ENCODE measurements at regions of chr6 and their contacts with region 1.

Region 1: DNA sequence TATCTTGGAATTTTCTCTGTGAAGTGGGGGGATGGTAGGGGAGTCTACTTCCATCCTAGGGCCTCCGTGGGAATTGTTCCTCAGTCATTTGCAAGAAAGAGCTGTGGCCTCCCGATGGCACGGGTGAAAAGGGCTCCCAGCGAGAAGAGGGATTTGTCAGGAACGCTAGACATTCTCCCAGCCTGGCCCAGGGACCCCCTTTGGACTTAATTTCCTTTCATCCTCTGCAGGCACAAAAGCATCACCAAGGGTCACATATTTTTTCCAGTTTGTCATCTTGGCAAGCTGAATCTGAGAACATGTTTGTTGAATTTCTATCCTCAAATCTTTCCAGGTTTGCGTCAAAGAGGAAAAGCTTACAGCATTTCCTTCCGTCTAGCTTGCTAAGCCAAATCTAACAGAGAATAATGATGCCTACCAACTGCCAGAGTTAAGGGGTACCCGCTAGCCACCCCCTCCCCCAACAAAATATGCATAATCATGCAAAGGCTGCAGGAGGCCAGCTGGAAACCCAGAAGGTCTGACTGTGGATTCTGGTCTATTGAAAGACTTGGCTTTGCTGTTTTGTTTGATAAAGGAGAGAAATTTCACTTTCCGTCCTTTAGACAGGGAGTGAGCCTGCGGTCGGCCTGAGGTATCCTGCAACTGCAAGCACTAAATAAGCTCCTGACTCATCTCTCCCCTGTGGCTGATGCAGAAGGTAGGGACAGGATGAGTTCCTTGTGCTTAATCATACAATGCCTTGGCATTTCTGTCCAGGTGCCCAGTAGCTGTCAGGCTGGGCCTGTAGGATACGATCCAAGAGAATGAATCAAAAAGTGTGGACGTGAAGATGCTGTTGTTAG is 23.1 kb downstream of the PSMG4 start:
- DNase-seq: no peak
- H3K4me3 ChIP-seq: no peak overlapping the region
- H3K27ac ChIP-seq: no peak overlapping the region
- H3K4me1 ChIP-seq: peaks cover 6% of the 10 kb centered on the region
- H3K27me3 ChIP-seq: no peaks in the 10 kb centered on the region
- CTCF ChIP-seq: no peak
- POLR2A ChIP-seq: no peak

Region 2: GRCh38 chr6:3108746-3109414 is 173.0 kb before region 1 on chr6:
- intact Hi-C with region 1: no loop called
- DNase-seq: no peak
- H3K4me3 ChIP-seq: no peak overlapping the region
- H3K27ac ChIP-seq: no peak overlapping the region
- H3K4me1 ChIP-seq: no peaks in the 10 kb centered on the region
- H3K27me3 ChIP-seq: no peaks in the 10 kb centered on the region
- CTCF ChIP-seq: no peak
- POLR2A ChIP-seq: no peak

Region 3: DNA sequence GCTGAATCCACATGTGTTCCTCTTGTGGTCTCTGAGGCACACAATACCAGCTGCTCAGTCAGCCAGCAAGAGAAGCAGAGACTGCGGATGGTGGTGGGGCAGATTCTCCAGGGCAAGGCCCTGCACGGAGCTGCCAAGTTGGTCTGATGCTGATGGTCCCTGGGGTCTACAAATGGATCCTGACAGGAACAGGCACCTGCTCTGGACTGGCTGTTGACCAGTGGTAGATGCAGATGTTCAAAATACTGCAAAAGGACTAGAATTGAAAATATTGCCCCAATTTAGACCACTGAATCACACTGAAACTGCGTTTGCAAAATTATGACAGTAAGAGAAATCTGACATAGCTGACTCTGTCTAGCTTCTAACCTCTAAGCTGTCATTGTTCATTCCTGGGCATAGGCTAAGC is 94.9 kb before region 1 on chr6:
- intact Hi-C with region 1: no loop called
- DNase-seq: no peak
- H3K4me3 ChIP-seq: no peak overlapping the region
- H3K27ac ChIP-seq: no peak overlapping the region
- H3K4me1 ChIP-seq: no peaks in the 10 kb centered on the region
- H3K27me3 ChIP-seq: no peaks in the 10 kb centered on the region
- CTCF ChIP-seq: no peak
- POLR2A ChIP-seq: no peak

Region 4: DNA sequence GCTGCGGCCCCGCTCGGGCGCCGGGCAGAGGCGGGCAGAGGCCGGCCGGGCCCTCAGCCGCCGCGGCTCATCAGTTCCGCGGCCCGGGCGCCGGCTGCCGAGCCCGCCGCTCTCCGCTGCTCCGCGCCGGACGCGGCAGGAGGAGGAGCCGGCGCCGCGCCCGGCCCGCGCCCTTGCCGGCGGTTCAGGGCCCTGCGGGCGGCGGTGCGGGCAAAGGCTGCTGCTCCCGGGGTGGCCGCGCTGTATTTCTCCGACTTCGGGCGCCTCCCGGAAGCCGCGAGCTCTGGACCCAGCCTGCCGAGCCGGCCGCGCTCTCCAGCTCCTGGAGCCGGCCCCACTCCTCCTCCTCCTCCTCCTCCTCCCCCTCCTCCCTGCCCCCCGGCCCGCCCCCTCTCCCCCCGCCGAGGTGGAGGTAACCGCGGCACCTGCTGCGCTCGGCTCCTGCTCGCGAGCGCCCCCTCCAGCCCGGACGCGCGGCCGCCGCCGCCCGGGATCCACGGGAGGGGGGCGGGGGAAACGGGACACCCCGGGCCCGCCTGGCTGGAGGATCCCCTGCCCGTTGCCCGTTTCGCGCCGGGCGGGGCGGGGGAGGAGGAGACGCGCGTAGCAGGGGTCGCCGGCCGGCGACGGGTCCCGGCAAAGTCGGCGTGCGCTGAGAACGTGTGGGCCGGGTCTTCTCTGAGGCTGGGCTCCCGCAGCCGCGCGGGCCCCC is 175.1 kb after region 1 on chr6 and contains the start of gene SLC22A23:
- intact Hi-C with region 1: loop called (anchors 5 kb)
- DNase-seq: peak; percentile 87
- H3K4me3 ChIP-seq: peak within 1 kb of the TSS; percentile 68
- H3K27ac ChIP-seq: peak within 1 kb of the TSS; percentile 84 to 88
- H3K4me1 ChIP-seq: no peaks in the 10 kb centered on the region
- H3K27me3 ChIP-seq: no peaks in the 10 kb centered on the region
- CTCF ChIP-seq: peak; percentile 74 to 94 (median 86)
- POLR2A ChIP-seq: peak; percentile 52
- total RNA-seq, gene SLC22A23: 53.1 to 129 TPM

Region 5: DNA sequence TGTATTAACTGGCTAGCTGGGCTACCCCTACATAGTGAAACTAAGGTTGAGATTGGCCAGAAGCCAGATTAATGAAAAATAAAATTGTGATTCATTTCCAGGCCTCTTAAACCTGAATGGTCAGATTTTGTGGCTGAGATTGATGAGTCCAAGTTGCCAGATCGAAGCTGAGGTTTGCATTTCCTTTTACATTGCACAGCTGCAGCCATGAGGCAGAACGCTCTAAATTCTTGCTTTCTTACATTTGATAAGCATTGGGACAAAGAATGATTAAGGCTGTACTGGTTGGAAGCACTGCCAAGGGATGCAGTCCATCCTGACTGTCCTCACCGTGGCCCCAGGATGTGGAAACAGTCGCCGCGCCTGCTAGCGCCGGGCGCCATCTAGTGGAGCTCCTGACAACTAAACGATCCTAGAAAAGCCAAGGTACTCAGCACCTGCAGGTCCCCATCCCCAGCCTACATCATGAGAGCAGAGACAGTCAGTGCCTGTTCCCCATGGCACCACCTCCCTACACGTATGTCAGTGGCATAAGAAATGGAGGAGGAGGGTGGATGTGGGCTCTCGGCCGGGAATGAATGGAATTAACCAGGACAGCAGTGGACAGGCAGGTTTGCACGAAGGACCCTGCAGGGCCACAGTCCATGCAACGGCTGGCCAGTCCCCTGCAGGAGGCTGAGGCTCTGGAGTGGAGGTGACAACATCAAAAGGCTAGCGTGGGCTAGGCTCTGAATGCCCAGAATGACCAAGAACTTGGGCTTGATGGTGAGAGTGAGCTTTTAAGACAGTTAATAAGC is 450.7 kb after region 1 on chr6:
- intact Hi-C with region 1: loop called (anchors 2 kb)
- DNase-seq: peak; percentile 79
- H3K4me3 ChIP-seq: no peak overlapping the region
- H3K27ac ChIP-seq: peak overlapping the region in 1 of 2 donors; percentile 20
- H3K4me1 ChIP-seq: peaks cover 3% of the 10 kb centered on the region
- H3K27me3 ChIP-seq: no peaks in the 10 kb centered on the region
- CTCF ChIP-seq: peak; percentile 59 to 92 (median 86)
- POLR2A ChIP-seq: no peak

Region 6: DNA sequence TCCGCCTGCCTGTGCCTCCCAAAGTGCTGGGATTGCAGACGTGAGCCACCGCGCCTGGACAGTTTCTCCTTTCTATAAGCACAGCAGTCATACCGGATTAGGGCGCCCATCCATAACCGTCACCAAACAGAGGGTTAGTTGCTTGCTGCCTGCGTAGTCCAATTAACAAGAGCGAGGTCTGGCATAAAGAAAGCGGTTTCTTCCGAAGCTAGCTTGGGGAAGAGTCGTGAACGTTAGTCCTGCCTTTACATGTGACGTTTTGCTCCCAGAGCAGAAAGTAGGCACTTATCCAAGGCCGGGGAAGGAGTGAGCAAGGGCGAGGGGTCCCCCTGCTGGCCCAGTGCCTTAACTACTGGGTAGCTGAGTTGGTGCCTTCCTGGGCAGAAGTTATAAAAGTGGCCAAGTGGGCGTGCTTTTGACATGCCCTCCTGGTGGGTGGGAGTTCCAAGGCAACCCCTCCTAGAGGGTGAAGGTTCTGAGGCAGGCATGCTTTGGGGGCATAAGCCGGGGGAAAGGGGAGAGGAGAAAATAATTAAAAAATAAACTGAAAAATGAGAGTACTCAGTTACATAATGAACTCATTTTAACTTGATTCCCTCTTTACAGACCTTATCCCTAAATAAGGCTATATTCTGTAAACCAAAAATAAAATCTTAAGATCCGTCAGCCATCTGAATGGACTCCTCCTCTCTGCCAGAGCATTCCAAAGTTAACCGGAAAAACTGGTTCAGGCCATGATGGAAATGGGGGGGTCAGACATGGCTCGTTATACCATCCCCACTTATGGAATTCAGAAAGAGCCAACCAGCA is 709.0 kb after region 1 on chr6:
- intact Hi-C with region 1: loop called (anchors 10 kb)
- DNase-seq: peak; percentile 85
- H3K4me3 ChIP-seq: peak overlapping the region; percentile 15 to 22
- H3K27ac ChIP-seq: peak overlapping the region; percentile 52 to 72
- H3K4me1 ChIP-seq: no peaks in the 10 kb centered on the region
- H3K27me3 ChIP-seq: no peaks in the 10 kb centered on the region
- CTCF ChIP-seq: peak; percentile 45 to 86 (median 70)
- POLR2A ChIP-seq: no peak